ENCODE measurements at regions of chr7 and their contacts with region 1.

Region 1: GRCh38 chr7:27160546-27161213 is 4.2 kb upstream of the HOXA7 start:
- DNase-seq: peak; percentile 61

Region 2: GRCh38 chr7:27143023-27143949 is 17.4 kb before region 1 on chr7 and contains the start of gene HOXA5:
- CTCF ChIA-PET with region 1: interaction called, 20 read pairs
- POLR2A ChIA-PET with region 1: interaction called, 45 read pairs
- DNase-seq: peak; percentile 79

Region 3: DNA sequence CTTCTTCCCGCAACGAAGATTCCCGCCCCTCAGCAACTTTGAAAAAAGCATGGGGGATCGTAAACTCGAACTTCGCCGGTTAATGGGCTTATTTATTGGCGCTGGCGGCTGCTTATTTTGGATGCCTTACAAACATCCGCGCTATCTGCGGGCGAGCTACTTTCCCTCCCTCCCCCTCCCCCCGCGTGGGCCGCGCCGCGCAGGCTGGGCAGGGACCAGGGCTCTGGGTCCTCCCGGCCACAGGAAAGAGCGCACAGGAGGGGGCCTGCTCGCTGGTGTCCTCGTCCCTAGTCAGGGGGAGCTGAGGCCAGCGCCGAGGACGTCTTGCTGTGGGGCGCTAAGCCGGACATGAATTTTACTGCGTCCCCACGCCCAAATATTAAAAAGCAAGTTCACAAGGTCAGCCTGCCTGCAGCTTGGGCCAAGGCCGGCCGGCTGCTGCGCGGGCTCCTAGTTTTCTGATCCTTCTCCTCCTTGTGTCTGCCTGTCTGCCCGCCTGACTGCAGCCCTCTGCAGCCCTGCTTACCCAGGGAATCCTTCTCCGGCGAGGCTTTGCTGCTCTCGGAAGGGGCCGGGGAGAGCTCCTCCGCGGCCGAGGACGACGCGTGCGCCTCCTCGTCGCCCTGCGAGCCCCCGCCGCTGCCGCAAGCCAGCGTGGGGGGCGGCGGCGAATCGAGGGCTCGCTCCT is 12.3 kb after region 1 on chr7:
- CTCF ChIA-PET with region 1: interaction called, 3 read pairs
- POLR2A ChIA-PET with region 1: interaction called, 367 read pairs
- DNase-seq: no peak